ENCODE measurements at regions of chr14 and their contacts with region 1.

Region 1: GRCh38 chr14:77067632-77068514 is 30.2 kb upstream of the CIPC start:
- DNase-seq: peak; percentile 68
- ATAC-seq: peak; percentile 68
- H3K4me3 Mint-ChIP-seq: no peak overlapping the region
- H3K27ac Mint-ChIP-seq: no peak overlapping the region
- H3K4me1 Mint-ChIP-seq: peaks cover 5% of the 10 kb centered on the region
- H3K27me3 Mint-ChIP-seq: peaks cover 18% of the 10 kb centered on the region

Region 2: GRCh38 chr14:76710056-76711010 is 357.5 kb before region 1 on chr14:
- CTCF ChIA-PET with region 1: interaction called, 20 read pairs
- DNase-seq: peak; percentile 41
- ATAC-seq: peak; percentile 36
- H3K4me3 Mint-ChIP-seq: no peak overlapping the region
- H3K27ac Mint-ChIP-seq: no peak overlapping the region
- H3K4me1 Mint-ChIP-seq: no peaks in the 10 kb centered on the region
- H3K27me3 Mint-ChIP-seq: peaks cover 16% of the 10 kb centered on the region

Region 3: DNA sequence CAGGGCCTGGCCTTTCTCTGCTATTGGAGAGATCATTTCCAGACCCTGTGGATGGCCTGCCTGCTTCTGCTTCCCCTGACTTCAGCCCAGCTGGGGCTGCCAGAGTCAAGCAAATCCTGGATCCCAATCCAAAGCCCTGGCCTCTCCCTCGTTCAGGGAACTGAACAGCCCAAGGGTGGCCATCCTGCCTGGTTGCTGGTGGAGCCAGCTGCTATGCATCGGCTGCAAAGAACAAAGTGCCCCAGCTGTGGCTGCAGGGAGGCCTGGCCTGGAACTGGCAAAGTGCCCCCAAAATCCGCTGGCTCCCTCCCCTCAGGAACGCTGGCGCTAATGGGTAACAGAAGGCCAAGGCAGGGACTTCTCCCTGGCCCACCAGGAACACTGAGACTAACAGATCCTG is 185.2 kb before region 1 on chr14:
- CTCF ChIA-PET with region 1: interaction called, 348 read pairs
- DNase-seq: no peak
- ATAC-seq: no peak
- H3K4me3 Mint-ChIP-seq: no peak overlapping the region
- H3K27ac Mint-ChIP-seq: no peak overlapping the region
- H3K4me1 Mint-ChIP-seq: peaks cover 5% of the 10 kb centered on the region
- H3K27me3 Mint-ChIP-seq: peaks cover 9% of the 10 kb centered on the region

Region 4: DNA sequence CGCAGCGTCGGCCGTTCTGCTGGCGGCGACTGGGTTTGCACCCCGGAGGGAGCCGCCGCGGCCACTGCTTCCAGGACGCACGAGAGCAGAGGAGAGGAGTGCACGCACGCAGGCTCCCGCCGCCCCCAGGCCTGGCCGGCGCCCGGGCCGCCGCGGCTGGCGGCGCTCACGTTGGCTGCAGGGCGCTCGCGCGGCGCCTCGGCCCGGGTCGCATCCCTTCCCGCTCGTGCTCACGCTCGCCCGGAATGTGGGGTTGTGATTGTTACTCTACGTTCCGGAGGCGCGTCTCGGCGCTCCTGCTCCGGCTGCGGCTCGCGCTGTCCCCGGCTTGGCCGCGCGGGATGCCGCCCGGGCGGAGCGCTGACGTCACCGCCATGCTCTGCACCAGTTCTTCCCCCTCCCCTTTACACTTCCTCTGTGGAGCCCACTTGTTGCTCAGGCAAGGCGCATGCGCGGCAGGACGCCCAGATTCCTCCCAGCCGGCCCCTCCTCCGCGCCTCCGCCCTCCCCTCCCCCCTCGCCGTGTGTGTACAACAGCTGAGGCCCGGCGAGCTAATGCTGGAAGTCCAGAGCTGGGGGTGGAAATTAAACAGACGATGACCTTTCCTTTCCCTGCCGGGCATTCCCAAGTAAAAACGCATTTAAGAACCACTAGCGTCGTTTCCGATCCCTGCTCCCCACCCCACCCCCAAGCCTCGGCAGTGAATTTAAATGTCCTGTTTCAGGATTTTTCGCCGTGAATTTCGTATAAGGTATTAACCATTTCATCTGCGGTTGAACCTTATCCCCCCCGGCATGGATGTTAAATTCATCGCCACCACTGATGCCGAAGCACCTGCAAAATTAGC is 39.3 kb before region 1 on chr14 and contains the start of gene IRF2BPL:
- CTCF ChIA-PET with region 1: interaction called, 10 read pairs
- DNase-seq: peak; percentile 97
- ATAC-seq: peak; percentile 78
- H3K4me3 Mint-ChIP-seq: peak within 1 kb of the TSS; percentile 89
- H3K27ac Mint-ChIP-seq: peak within 1 kb of the TSS; percentile 93
- H3K4me1 Mint-ChIP-seq: peaks cover 57% of the 10 kb centered on the region
- H3K27me3 Mint-ChIP-seq: no peaks in the 10 kb centered on the region
- total RNA-seq, gene IRF2BPL: 19.7 to 24.9 TPM

Region 5: DNA sequence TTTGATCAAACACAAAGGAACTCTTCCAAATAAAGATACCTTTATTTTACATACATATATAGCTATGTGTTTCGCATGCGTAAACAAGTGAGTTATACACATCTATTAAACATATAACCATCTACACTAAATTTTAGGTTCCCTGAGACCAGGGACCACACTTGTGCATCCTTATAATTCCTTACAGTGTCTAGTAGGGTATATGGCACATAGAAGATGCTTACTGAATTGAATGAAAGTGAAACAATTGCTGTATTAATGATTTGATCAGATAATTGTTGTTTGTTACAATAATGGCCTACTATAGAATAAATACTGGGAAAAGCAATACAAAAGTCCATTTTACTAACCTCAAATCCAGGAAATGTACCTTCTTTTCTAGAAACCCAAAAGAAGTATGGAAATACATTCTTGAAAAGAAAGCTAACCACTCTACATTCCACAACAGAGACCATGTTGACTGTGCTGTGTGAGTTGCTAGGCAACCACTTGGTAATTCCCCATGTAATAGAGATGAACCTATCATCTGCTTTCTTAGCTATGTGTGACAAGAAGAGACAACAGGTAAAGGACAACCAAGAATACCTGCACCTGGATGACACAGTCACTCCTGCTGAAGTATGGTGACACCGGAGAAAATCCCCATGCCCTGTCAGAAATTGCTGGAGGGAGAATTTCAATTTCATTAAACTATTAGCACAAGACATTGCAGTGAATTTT is 18.3 kb after region 1 on chr14:
- CTCF ChIA-PET with region 1: interaction called, 84 read pairs
- DNase-seq: no peak
- ATAC-seq: peak; percentile 42
- H3K4me3 Mint-ChIP-seq: no peak overlapping the region
- H3K27ac Mint-ChIP-seq: no peak overlapping the region
- H3K4me1 Mint-ChIP-seq: peaks cover 7% of the 10 kb centered on the region
- H3K27me3 Mint-ChIP-seq: peaks cover 23% of the 10 kb centered on the region

Measured in activated CD8-positive, alpha-beta memory T cell treated with anti-CD3 and anti-CD28 coated beads, Interleukin-2, amount 10 ng/mL, durations not matched to agents 7 days and 5 days (primary cell).